WTC11 (cell line): ENCODE measurements at regions of chr14 and their contacts with region 1.

Region 1: DNA sequence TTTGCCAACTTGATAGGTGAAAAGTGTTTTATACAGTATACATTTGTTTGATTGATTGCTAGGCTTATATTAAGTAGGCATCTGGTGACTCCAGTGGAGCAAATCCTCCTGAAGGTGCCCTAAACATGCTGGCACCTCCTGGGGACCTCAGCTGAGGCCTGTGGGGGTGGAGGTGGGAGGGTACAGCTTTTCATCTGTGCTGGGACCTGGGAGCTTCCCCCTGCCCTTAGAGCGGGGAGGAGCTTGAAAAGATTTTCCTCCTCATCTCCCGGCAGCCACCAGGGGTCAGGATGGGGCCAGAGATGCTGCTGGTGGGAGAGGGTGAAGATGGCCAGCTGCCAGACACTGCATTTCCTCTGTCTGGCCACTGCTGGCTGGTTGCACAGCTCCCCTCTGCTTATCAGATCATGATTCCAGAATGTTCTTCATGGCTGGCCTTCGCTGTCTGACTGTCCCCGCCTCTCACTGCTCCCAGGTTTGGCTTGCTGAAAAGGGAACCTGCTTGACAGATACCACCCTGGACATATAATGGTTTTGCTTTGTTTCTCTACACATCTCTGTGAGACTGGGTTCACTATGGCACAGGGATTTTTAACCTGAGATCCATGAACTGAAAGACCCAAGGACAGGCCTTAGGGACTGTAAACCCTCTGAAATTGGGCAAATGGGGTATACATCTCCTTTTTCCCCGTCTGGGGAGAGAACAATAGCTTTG is 10.5 kb upstream of the JPH4 start:
- DNase-seq: peak; percentile 91
- ATAC-seq: peak; percentile 100
- H3K4me3 Mint-ChIP-seq: no peak overlapping the region
- H3K27ac Mint-ChIP-seq: no peak overlapping the region
- H3K4me1 Mint-ChIP-seq: peaks cover 20% of the 10 kb centered on the region
- H3K27me3 Mint-ChIP-seq: peaks cover 16% of the 10 kb centered on the region
- CTCF ChIP-seq: peak; percentile 68

Region 2: GRCh38 chr14:23494223-23494622 is 94.8 kb before region 1 on chr14:
- CTCF ChIA-PET with region 1: interaction called, 10 read pairs
- POLR2A ChIA-PET with region 1: no interaction called
- DNase-seq: peak; percentile 44
- ATAC-seq: peak; percentile 99
- H3K4me3 Mint-ChIP-seq: peak overlapping the region; percentile 37; the same call in 1 of the 2 replicates
- H3K27ac Mint-ChIP-seq: peak overlapping the region; percentile 95
- H3K4me1 Mint-ChIP-seq: peaks cover 30% of the 10 kb centered on the region
- H3K27me3 Mint-ChIP-seq: no peaks in the 10 kb centered on the region
- CTCF ChIP-seq: no peak

Region 3: DNA sequence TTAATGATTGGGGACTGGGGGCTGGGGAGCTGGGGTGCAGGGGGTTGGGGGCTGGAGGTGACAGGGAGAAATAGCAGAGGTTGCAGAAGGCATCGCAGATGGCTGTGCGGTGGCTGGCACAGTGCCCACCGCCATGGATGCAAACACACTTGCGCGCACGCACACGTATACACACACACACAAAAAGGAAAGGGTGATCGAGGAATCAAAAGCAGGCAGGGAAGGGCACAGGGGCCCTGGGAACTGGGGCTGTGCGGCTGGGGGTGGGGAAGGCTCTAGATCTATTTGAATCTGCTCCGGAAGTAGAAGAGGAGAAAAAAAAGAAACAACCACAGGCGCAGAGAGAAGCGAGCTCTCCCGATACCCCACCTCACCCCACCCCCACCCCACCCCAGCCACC is 76.9 kb before region 1 on chr14:
- CTCF ChIA-PET with region 1: no interaction called
- POLR2A ChIA-PET with region 1: no interaction called
- DNase-seq: no peak
- ATAC-seq: no peak
- H3K4me3 Mint-ChIP-seq: no peak overlapping the region
- H3K27ac Mint-ChIP-seq: no peak overlapping the region
- H3K4me1 Mint-ChIP-seq: peaks cover 8% of the 10 kb centered on the region
- H3K27me3 Mint-ChIP-seq: peaks cover 40% of the 10 kb centered on the region
- CTCF ChIP-seq: no peak

Region 4: DNA sequence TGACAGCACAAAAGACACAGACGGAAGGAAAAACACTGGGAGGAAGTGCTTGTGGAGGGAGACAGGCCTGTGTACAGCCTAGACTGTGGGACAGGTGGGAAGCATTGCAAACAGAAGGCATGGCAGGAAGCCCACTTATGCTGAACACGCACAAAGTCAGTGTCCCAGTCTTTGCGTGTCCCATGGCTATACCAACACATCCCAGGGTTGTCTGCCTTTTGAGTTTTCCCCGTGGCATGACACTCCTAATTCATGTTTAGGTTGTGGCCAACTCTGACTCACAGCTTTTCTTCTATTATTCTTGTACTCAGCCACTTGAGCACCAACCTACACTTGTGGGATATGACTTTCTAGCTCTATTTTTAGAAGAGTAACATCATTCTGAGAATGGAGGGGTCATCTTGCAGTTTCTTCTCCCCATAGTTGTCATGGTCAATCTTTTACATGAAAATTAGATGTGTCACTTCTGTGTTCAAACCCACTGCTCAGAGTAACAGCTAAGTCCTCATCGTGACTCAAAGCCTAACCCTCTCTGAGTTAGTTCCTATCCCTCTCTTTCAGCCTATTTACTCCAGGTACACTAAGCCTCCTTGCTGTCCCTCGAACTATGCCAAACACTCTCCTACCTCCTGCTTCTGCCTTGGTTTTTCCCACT is 17.0 kb after region 1 on chr14:
- CTCF ChIA-PET with region 1: interaction called, 16 read pairs
- POLR2A ChIA-PET with region 1: no interaction called
- DNase-seq: no peak
- ATAC-seq: no peak
- H3K4me3 Mint-ChIP-seq: no peak overlapping the region
- H3K27ac Mint-ChIP-seq: no peak overlapping the region
- H3K4me1 Mint-ChIP-seq: no peaks in the 10 kb centered on the region
- H3K27me3 Mint-ChIP-seq: peaks cover 19% of the 10 kb centered on the region
- CTCF ChIP-seq: no peak

Region 5: GRCh38 chr14:23665375-23666192 is 76.5 kb after region 1 on chr14:
- CTCF ChIA-PET with region 1: interaction called, 11 read pairs
- POLR2A ChIA-PET with region 1: no interaction called
- DNase-seq: peak; percentile 67
- ATAC-seq: peak; percentile 85
- H3K4me3 Mint-ChIP-seq: no peak overlapping the region
- H3K27ac Mint-ChIP-seq: no peak overlapping the region
- H3K4me1 Mint-ChIP-seq: peaks cover 5% of the 10 kb centered on the region
- H3K27me3 Mint-ChIP-seq: no peaks in the 10 kb centered on the region; the same call in 1 of the 2 replicates
- CTCF ChIP-seq: 0 out of 2 replicates have a peak, but pooled peaks have one; percentile 32

Region 6: GRCh38 chr14:23727566-23728335 is 138.7 kb after region 1 on chr14:
- CTCF ChIA-PET with region 1: interaction called, 15 read pairs
- POLR2A ChIA-PET with region 1: no interaction called
- DNase-seq: no peak
- ATAC-seq: peak; percentile 86
- H3K4me3 Mint-ChIP-seq: no peak overlapping the region
- H3K27ac Mint-ChIP-seq: no peak overlapping the region
- H3K4me1 Mint-ChIP-seq: no peaks in the 10 kb centered on the region
- H3K27me3 Mint-ChIP-seq: no peaks in the 10 kb centered on the region
- CTCF ChIP-seq: peak; percentile 61

Region 7: GRCh38 chr14:23953464-23954278 is 364.6 kb after region 1 on chr14 and contains the start of gene DHRS4:
- CTCF ChIA-PET with region 1: interaction called, 17 read pairs
- POLR2A ChIA-PET with region 1: no interaction called
- DNase-seq: peak; percentile 82
- ATAC-seq: peak; percentile 95
- H3K4me3 Mint-ChIP-seq: peak within 1 kb of the TSS; percentile 87
- H3K27ac Mint-ChIP-seq: peak within 1 kb of the TSS; percentile 84
- H3K4me1 Mint-ChIP-seq: peaks cover 26% of the 10 kb centered on the region
- H3K27me3 Mint-ChIP-seq: peaks cover 2% of the 10 kb centered on the region; the same call in 1 of the 2 replicates
- CTCF ChIP-seq: peak; percentile 84
- total RNA-seq, gene DHRS4: 14.5 to 14.9 TPM (median 14.8 TPM) in 3 replicates